Naive thymus-derived CD4-positive, alpha-beta T cell (primary cell): ENCODE measurements at regions of chr15 and their contacts with region 1.

Region 1: DNA sequence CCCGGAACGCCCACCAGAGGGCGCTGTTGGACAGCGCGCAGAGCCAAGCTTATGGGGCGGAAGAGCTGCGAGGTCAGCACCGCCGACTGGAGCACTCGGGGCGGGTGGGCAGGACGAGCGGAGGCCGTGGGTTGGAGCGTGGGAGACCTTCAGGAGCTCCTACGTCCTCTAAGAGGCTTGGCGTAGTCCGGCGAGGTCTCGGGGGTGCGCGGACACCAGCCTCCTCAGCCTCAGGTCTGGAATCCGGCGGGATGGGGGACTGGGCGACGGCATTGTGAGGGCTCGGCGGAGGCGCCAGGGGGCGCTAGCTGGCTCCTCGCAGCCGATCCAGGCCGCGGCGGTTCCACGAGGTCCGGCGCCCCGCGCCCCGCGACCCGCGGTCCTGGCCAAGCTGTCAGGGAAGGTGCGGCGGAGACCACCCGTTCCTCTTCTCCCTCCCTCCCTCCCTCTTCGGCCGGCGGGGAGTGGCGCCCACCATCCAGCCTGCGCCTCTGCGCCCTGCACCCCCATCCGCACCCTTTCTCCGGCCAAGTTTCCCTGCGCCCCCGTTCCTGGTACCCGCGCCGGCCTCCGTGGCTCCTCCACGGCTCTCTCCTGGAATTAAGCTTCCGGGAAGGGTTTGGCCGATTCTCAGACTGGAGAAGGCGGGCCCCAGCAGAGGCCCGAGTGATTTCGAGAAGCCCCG is 24.3 kb upstream of the POLG start:
- DNase-seq: peak; percentile 61 to 89 (median 80)
- ATAC-seq: peak; percentile 96
- H3K4me3 ChIP-seq: peak overlapping the region; percentile 57
- H3K4me3 Mint-ChIP-seq: peak overlapping the region; percentile 70 to 90 (median 80)
- H3K27ac ChIP-seq: no peak overlapping the region
- H3K27ac Mint-ChIP-seq: peak overlapping the region in 1 of 9 donors; percentile 43
- H3K4me1 ChIP-seq: peaks cover 4 to 10% of the 10 kb centered on the region in 2 donors
- H3K4me1 Mint-ChIP-seq: peaks cover 0 to 23% (median 16%) of the 10 kb centered on the region in 7 donors
- H3K27me3 ChIP-seq: peaks cover 8 to 33% of the 10 kb centered on the region in 2 donors
- H3K27me3 Mint-ChIP-seq: peaks cover 61 to 83% (median 72%) of the 10 kb centered on the region in 5 donors

Region 2: DNA sequence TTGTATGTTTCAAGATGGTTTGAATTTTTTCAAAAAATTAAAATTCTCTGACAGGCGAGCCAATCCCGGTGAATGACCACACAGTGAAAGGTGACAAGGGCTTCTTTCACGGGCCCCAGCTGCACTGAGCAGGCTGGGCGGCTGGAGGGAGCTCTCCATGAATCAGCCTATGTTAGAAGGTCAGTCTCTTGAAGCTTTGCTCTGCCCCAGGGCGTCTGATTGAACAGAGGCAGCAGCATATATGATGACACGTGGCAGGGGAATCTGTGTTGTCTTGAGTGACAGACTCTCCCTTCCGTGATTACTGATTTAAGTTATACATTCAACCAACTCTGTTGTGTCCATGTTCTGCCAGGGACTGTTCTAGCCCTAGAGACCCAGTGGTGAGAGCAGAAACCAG is 668.6 kb before region 1 on chr15:
- CTCF ChIA-PET with region 1: no interaction called
- POLR2A ChIA-PET with region 1: no interaction called
- intact Hi-C with region 1: no loop called
- DNase-seq: no peak
- ATAC-seq: no peak
- H3K4me3 ChIP-seq: no peak overlapping the region
- H3K4me3 Mint-ChIP-seq: no peak overlapping the region
- H3K27ac ChIP-seq: no peak overlapping the region
- H3K27ac Mint-ChIP-seq: no peak overlapping the region
- H3K4me1 ChIP-seq: no peaks in the 10 kb centered on the region
- H3K4me1 Mint-ChIP-seq: no peaks in the 10 kb centered on the region
- H3K27me3 ChIP-seq: no peaks in the 10 kb centered on the region
- H3K27me3 Mint-ChIP-seq: peaks cover 6 to 28% (median 17%) of the 10 kb centered on the region in 5 donors

Region 3: GRCh38 chr15:89293012-89293411 is 65.9 kb before region 1 on chr15:
- CTCF ChIA-PET with region 1: no interaction called
- POLR2A ChIA-PET with region 1: no interaction called
- intact Hi-C with region 1: no loop called
- DNase-seq: no peak
- ATAC-seq: no peak
- H3K4me3 ChIP-seq: no peak overlapping the region
- H3K4me3 Mint-ChIP-seq: no peak overlapping the region
- H3K27ac ChIP-seq: no peak overlapping the region
- H3K27ac Mint-ChIP-seq: peak overlapping the region in 1 of 9 donors; percentile 18
- H3K4me1 ChIP-seq: no peaks in the 10 kb centered on the region
- H3K4me1 Mint-ChIP-seq: peaks cover 0 to 6% (median 0%) of the 10 kb centered on the region in 7 donors
- H3K27me3 ChIP-seq: no peaks in the 10 kb centered on the region
- H3K27me3 Mint-ChIP-seq: no peaks in the 10 kb centered on the region

Region 4: GRCh38 chr15:89378296-89379151 is 19.6 kb after region 1 on chr15:
- CTCF ChIA-PET with region 1: interaction called, 14 read pairs
- POLR2A ChIA-PET with region 1: no interaction called
- intact Hi-C with region 1: loop called in 1 of 2 experiments (anchors 2 kb)
- DNase-seq: peak in 3 of 9 donors; percentile 10 to 21 (median 14)
- ATAC-seq: peak; percentile 53
- H3K4me3 ChIP-seq: peak overlapping the region; percentile 27
- H3K4me3 Mint-ChIP-seq: peak overlapping the region in 9 of 10 donors; percentile 69 to 84 (median 79)
- H3K27ac ChIP-seq: no peak overlapping the region
- H3K27ac Mint-ChIP-seq: peak overlapping the region in 3 of 9 donors; percentile 45 to 80 (median 69)
- H3K4me1 ChIP-seq: no peaks in the 10 kb centered on the region
- H3K4me1 Mint-ChIP-seq: peaks cover 0 to 20% (median 8%) of the 10 kb centered on the region in 7 donors
- H3K27me3 ChIP-seq: peaks cover 6 to 10% of the 10 kb centered on the region in 2 donors
- H3K27me3 Mint-ChIP-seq: peaks cover 73 to 95% (median 76%) of the 10 kb centered on the region in 5 donors

Region 5: GRCh38 chr15:89416141-89416853 is 57.4 kb after region 1 on chr15:
- CTCF ChIA-PET with region 1: interaction called, 3 read pairs
- POLR2A ChIA-PET with region 1: no interaction called
- intact Hi-C with region 1: loop called in 1 of 2 experiments (anchors 2 kb)
- DNase-seq: peak; percentile 22 to 76 (median 39)
- ATAC-seq: peak; percentile 94
- H3K4me3 ChIP-seq: no peak overlapping the region
- H3K4me3 Mint-ChIP-seq: peak overlapping the region in 3 of 10 donors; percentile 27 to 72 (median 36)
- H3K27ac ChIP-seq: no peak overlapping the region
- H3K27ac Mint-ChIP-seq: peak overlapping the region in 1 of 9 donors; percentile 23
- H3K4me1 ChIP-seq: peaks cover 0 to 4% of the 10 kb centered on the region in 2 donors
- H3K4me1 Mint-ChIP-seq: peaks cover 9 to 14% (median 11%) of the 10 kb centered on the region in 7 donors
- H3K27me3 ChIP-seq: peaks cover 15 to 32% of the 10 kb centered on the region in 2 donors
- H3K27me3 Mint-ChIP-seq: peaks cover 77 to 89% (median 85%) of the 10 kb centered on the region in 5 donors

Region 6: DNA sequence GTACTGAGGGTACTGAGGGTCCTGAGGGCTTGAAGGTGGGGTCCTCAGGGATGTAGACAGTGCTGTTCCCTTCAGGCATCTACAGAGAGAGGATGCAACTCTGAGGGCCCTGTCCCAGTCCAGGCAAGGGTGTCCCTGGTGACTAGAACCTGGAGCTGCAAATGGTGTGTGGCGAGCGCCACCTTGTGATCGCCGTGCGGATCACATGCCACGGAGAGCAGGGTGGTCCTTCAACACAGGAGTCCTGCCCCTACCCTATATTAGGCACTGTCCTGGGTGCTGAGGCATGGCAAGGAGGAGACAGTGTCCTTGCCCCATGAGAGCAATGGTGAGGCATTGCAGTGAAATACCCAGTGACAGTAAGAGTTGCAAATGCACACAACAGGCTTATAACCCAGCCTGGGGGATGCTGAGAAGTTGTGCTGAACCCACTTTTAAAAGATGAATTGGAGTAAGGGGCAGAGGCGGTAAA is 113.9 kb after region 1 on chr15:
- CTCF ChIA-PET with region 1: no interaction called
- POLR2A ChIA-PET with region 1: no interaction called
- intact Hi-C with region 1: loop called in 1 of 2 experiments (anchors 1 kb)
- DNase-seq: peak in 1 of 9 donors; percentile 52
- ATAC-seq: peak; percentile 36
- H3K4me3 ChIP-seq: no peak overlapping the region
- H3K4me3 Mint-ChIP-seq: no peak overlapping the region
- H3K27ac ChIP-seq: no peak overlapping the region
- H3K27ac Mint-ChIP-seq: no peak overlapping the region
- H3K4me1 ChIP-seq: no peaks in the 10 kb centered on the region
- H3K4me1 Mint-ChIP-seq: peaks cover 0 to 11% (median 1%) of the 10 kb centered on the region in 7 donors
- H3K27me3 ChIP-seq: peaks cover 0 to 7% of the 10 kb centered on the region in 2 donors
- H3K27me3 Mint-ChIP-seq: peaks cover 25 to 27% (median 26%) of the 10 kb centered on the region in 5 donors

Region 7: DNA sequence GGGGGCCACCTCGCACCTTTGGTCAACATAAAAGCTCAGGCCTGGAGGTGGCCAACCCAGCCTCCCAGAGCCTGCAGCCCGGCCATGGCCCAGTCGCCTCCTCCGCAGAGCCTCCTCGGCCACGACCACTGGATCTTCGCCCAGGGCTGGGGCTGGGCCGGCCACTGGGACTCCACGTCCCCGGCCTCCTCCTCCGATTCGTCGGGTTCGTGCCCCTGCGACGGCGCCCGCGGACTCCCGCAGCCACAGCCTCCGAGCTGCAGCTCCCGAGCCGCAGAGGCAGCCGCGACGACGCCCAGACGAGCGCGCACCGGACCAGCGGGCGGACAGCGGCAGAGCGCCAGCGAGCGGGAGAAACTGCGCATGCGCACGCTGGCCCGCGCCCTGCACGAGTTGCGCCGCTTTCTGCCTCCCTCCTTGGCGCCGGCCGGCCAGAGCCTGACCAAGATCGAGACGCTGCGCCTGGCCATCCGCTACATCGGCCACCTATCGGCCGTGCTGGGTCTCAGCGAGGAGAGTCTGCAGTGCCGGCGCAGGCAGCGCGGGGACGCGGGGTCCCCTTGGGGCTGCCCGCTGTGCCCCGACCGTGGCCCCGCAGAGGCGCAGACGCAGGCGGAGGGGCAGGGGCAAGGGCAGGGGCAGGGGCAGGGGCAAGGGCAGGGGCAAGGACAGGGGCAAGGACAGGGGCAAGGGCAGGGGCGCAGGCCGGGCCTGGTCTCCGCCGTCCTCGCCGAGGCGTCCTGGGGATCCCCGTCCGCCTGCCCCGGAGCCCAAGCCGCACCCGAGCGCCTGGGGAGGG is 417.6 kb after region 1 on chr15 and contains the start of gene MESP2:
- CTCF ChIA-PET with region 1: no interaction called
- POLR2A ChIA-PET with region 1: no interaction called
- intact Hi-C with region 1: no loop called
- DNase-seq: peak in 7 of 9 donors; percentile 24 to 69 (median 43)
- ATAC-seq: peak; percentile 68
- H3K4me3 ChIP-seq: peak within 1 kb of the TSS; percentile 24
- H3K4me3 Mint-ChIP-seq: peak within 1 kb of the TSS in 9 of 10 donors; percentile 34 to 80 (median 64)
- H3K27ac ChIP-seq: no peak within 1 kb of the TSS
- H3K27ac Mint-ChIP-seq: no peak within 1 kb of the TSS
- H3K4me1 ChIP-seq: no peaks in the 10 kb centered on the region
- H3K4me1 Mint-ChIP-seq: peaks cover 0 to 13% (median 0%) of the 10 kb centered on the region in 7 donors
- H3K27me3 ChIP-seq: no peaks in the 10 kb centered on the region
- H3K27me3 Mint-ChIP-seq: peaks cover 14 to 29% (median 22%) of the 10 kb centered on the region in 5 donors
- total RNA-seq, gene MESP2: not detected